Stomach (tissue), 19 donors: ENCODE measurements at regions of chr7 and their contacts with region 1.

Region 1: GRCh38 chr7:27160546-27161213 is 4.2 kb upstream of the HOXA7 start:
- DNase-seq: peak; percentile 88 to 95
- H3K4me3 ChIP-seq: peak overlapping the region; percentile 54 to 67 (median 60)
- H3K27ac ChIP-seq: peak overlapping the region in 2 of 5 donors; percentile 34 to 99
- H3K4me1 ChIP-seq: peaks cover 16 to 56% (median 49%) of the 10 kb centered on the region in 4 donors
- H3K27me3 ChIP-seq: peaks cover 26 to 100% (median 91%) of the 10 kb centered on the region in 3 donors
- CTCF ChIP-seq: peak in 6 of 7 experiments; percentile 70 to 100 (median 98)
- EP300 ChIP-seq: no peak
- POLR2A ChIP-seq: no peak

Region 2: GRCh38 chr7:26681819-26682418 is 478.8 kb before region 1 on chr7:
- intact Hi-C with region 1: loop called (anchors 5 kb)
- DNase-seq: peak in 1 of 2 donors; percentile 51
- H3K4me3 ChIP-seq: no peak overlapping the region
- H3K27ac ChIP-seq: no peak overlapping the region
- H3K4me1 ChIP-seq: peaks cover 0 to 19% (median 0%) of the 10 kb centered on the region in 4 donors
- H3K27me3 ChIP-seq: no peaks in the 10 kb centered on the region
- CTCF ChIP-seq: peak in 5 of 7 experiments; percentile 18 to 63 (median 61)
- EP300 ChIP-seq: no peak
- POLR2A ChIP-seq: no peak

Region 3: DNA sequence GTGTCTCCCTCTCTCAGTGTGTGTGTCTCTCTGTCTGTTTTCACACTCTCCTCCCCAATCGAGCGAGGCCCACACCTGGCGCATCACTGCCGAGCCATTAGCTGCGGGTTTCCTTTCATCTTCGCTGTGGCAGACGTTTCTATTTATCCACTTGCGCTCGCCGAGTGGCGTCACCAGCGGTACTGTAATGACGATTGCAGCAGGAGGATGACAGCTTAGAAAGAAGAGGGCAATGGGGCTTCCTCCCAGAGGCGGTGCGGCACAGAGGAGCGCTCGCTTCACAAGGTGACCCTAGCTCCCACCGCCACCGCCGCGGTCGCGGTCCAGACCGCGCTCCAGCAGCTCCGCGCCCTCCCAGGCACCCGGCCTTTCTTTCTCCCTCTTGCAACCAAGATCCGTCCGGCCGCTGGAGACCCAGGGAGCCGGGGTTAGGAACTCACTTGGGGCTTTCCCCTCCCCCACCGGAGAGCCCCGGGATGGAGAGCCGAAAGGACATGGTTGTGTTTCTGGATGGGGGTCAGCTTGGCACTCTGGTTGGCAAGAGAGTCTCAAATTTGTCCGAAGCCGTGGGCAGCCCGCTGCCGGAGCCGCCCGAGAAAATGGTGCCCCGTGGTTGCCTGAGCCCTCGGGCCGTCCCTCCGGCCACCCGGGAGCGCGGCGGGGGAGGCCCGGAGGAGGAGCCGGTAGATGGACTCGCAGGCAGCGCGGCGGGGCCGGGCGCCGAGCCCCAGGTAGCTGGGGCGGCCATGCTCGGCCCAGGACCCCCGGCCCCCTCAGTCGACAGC is 82.1 kb after region 1 on chr7 and contains the start of gene EVX1:
- intact Hi-C with region 1: no loop called
- DNase-seq: no peak
- H3K4me3 ChIP-seq: peak within 1 kb of the TSS in 2 of 4 donors; percentile 25 to 33
- H3K27ac ChIP-seq: no peak within 1 kb of the TSS
- H3K4me1 ChIP-seq: peaks cover 34 to 66% (median 52%) of the 10 kb centered on the region in 4 donors
- H3K27me3 ChIP-seq: peaks cover 50 to 100% (median 100%) of the 10 kb centered on the region in 3 donors
- CTCF ChIP-seq: no peak
- EP300 ChIP-seq: no peak
- POLR2A ChIP-seq: no peak
- total RNA-seq, gene EVX1: not detected